Activated CD4-positive, alpha-beta T cell treated with anti-CD3 and anti-CD28 coated beads for 36 hours (primary cell): ENCODE measurements at regions of chr1 and their contacts with region 1.

Region 1: GRCh38 chr1:154791292-154792166 is 78.6 kb downstream of the KCNN3 start:
- DNase-seq: peak; percentile 92
- ATAC-seq: peak; percentile 93
- H3K4me3 Mint-ChIP-seq: peak overlapping the region; percentile 51
- H3K27ac Mint-ChIP-seq: peak overlapping the region; percentile 86
- H3K4me1 Mint-ChIP-seq: peaks cover 43% of the 10 kb centered on the region
- H3K27me3 Mint-ChIP-seq: no peaks in the 10 kb centered on the region

Region 2: DNA sequence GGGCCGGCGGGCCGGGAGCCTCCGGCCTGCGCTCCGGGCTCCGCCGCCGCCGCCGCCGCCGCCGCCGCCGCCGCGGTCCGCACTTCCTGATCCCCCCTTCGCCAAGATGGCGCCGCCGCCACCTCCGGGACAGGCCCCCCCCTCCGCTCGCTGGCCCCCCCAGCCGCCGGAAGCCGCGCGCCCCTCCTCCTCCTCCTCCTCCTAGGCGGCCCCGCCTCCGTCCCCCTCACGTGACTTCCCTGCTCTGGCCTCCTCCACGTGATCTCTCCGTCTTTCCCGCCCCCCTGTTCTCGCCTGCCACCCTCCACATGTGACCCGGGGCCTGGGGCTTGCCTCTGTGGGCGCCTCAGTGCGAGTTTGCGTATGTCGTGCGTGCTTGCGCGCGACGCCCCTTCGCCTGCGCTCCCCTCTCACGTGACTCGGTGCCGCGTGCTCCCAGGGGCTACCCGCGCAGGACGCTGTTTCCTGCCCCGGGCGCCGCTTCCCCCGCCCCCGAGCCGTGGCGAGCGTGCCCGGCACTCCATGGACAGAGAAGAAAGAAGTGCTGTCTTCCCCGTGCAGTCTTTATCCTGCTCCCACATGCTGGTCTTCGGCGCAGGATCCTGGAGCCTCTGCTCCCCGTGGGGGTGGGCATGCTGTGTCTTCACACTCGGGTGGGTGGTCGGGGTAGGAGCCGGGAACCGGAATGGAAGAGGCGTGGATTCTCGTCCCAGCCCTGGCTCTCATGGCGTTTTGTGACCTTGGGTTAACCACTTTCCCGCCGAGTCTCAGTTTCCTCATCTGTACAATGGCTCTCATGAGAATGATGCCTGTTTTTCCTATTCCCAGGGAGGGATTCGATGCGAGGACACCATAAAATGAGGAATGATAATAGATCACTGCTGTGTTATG is 232.7 kb before region 1 on chr1 and contains the start of gene UBE2Q1:
- CTCF ChIA-PET with region 1: no interaction called
- POLR2A ChIA-PET with region 1: no interaction called
- intact Hi-C with region 1: no loop called
- DNase-seq: peak; percentile 100
- ATAC-seq: peak; percentile 95
- H3K4me3 Mint-ChIP-seq: peak within 1 kb of the TSS; percentile 93
- H3K27ac Mint-ChIP-seq: peak within 1 kb of the TSS; percentile 96
- H3K4me1 Mint-ChIP-seq: peaks cover 20% of the 10 kb centered on the region
- H3K27me3 Mint-ChIP-seq: no peaks in the 10 kb centered on the region
- total RNA-seq, gene UBE2Q1: 89.3 to 101 TPM

Region 3: DNA sequence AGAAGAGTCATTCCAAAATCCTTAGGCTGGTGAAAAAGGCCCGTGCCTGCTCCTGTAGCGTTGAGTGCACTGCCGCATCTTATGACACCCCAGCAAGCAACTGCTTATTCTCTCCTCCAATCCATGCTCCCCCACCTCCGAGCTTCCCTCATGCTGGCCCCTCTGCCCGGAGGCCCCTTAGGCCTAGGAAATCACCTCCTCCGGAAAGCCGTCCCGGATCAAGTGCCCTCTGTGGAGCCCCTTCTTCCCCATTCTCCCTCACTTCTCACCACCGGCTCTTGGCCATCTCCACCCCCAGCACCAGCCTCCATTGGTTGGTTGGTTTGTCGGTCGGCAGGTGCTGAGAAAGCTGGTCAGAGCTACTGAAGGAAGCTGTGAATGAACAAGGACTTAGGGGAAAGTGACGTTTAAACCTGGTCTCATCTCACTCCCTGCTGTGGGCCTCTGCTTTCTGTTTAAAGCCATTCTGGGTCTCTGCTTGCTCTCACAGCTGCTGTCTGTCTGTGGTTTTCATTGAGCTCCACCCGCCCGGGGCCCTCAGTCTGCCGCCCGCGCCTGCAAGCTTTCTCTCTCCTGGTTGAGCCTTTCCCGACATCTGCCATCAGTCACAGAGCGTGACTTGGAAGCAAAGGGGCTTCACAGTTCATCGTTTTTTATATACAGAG is 43.7 kb before region 1 on chr1:
- CTCF ChIA-PET with region 1: interaction called, 7 read pairs
- POLR2A ChIA-PET with region 1: interaction called, 4 read pairs
- intact Hi-C with region 1: loop called in 1 of 2 experiments (anchors 1 kb)
- DNase-seq: peak; percentile 80
- ATAC-seq: peak; percentile 78
- H3K4me3 Mint-ChIP-seq: peak overlapping the region; percentile 80
- H3K27ac Mint-ChIP-seq: peak overlapping the region; percentile 98
- H3K4me1 Mint-ChIP-seq: peaks cover 80% of the 10 kb centered on the region
- H3K27me3 Mint-ChIP-seq: no peaks in the 10 kb centered on the region

Region 4: DNA sequence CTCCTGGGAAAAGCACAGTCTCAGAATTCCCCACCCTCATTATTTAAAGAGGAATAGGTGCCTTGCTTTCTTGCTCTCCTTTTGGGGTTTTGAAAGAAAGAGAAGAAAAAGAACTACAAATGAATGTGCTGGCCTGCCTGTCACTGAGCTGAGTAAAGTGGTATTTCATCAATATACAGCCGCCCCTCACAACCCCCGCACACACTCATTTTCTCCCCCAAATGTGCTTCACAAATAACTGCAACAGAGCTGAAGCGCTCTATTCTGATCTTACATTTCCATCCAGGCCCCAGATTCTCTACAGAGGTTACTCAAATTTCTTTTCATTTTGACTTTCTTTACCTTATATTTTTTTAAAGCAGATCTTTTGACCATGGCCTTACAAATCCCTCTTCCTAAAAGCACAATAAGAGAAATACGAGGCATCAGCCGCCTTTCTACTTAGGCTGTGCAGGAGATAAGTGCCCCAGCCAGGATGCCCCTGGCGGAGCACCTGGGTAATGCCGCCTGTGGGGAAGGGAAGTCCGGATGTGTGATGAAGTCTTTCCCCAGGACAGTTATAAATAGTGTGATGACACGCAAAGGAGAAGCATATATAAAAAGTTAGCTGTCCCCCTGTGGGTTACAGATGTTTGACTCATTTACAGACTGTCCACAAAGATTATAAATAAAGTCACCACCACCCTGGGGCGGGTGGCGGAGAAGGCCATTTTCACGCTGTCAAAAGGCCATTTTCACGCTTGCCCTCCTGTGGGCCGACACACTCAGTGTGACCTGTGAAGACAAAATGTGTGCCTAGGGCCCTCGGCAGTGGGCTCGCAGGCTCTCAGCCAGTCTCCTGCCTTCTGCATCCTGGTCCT is 72.0 kb after region 1 on chr1:
- CTCF ChIA-PET with region 1: interaction called, 5 read pairs
- POLR2A ChIA-PET with region 1: no interaction called
- intact Hi-C with region 1: loop called in 1 of 2 experiments (anchors 2 kb)
- DNase-seq: peak; percentile 61
- ATAC-seq: peak; percentile 74
- H3K4me3 Mint-ChIP-seq: no peak overlapping the region
- H3K27ac Mint-ChIP-seq: peak overlapping the region; percentile 45
- H3K4me1 Mint-ChIP-seq: peaks cover 36% of the 10 kb centered on the region
- H3K27me3 Mint-ChIP-seq: peaks cover 17% of the 10 kb centered on the region